Heart right ventricle (tissue), 16 donors: ENCODE measurements at regions of chr13 and their contacts with region 1.

Region 1: DNA sequence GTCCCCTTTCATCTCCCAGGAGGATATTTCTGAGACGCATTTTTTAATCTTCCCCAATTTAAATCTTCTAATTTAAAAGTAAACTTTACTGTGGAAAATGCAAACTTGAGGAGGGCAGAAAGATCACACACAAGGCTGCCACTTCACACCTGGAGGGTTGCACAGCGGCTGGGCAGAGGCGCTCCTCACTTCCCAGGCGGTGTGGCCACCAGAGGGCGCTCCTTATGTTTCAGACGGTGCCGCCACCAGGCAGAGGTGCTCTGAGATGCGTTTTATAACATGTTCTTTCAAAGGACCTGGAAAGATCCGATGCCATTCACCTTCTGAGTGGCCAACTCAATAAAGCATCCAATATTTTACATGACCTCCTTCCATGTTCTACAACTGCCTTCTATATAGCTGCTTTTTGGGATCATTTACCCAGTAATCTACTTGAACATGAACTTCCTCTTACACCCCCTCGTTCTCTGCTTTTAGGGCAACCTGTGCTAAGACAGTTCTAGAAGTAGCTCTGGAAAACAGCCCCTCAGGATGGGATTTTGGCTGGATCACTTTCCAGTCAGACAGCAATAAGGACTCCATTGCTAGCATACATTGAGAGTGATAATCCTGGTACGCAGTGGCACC is 14.8 kb upstream of the MTUS2 start:
- DNase-seq: peak; percentile 11 to 48
- ATAC-seq: peak in 1 of 8 donors; percentile 45
- H3K4me3 ChIP-seq: no peak overlapping the region
- H3K27ac ChIP-seq: no peak overlapping the region
- H3K4me1 ChIP-seq: no peaks in the 10 kb centered on the region
- H3K27me3 ChIP-seq: peaks cover 0 to 41% (median 9%) of the 10 kb centered on the region in 7 donors
- CTCF ChIP-seq: peak in 7 of 9 donors; percentile 36 to 52 (median 45)

Region 2: GRCh38 chr13:28697441-28697840 is 107.9 kb before region 1 on chr13:
- intact Hi-C with region 1: no loop called
- DNase-seq: no peak
- ATAC-seq: no peak
- H3K4me3 ChIP-seq: no peak overlapping the region
- H3K27ac ChIP-seq: no peak overlapping the region
- H3K4me1 ChIP-seq: no peaks in the 10 kb centered on the region
- H3K27me3 ChIP-seq: no peaks in the 10 kb centered on the region
- CTCF ChIP-seq: no peak

Region 3: GRCh38 chr13:29260683-29261082 is 455.4 kb after region 1 on chr13:
- intact Hi-C with region 1: loop called in 4 of 10 experiments (anchors 10 kb)
- DNase-seq: no peak
- ATAC-seq: peak in 7 of 8 donors; percentile 29 to 82 (median 75)
- H3K4me3 ChIP-seq: no peak overlapping the region
- H3K27ac ChIP-seq: no peak overlapping the region
- H3K4me1 ChIP-seq: peaks cover 0 to 7% (median 0%) of the 10 kb centered on the region in 9 donors
- H3K27me3 ChIP-seq: peaks cover 0 to 3% (median 0%) of the 10 kb centered on the region in 7 donors
- CTCF ChIP-seq: peak in 8 of 9 donors; percentile 6 to 58 (median 44)

Region 4: DNA sequence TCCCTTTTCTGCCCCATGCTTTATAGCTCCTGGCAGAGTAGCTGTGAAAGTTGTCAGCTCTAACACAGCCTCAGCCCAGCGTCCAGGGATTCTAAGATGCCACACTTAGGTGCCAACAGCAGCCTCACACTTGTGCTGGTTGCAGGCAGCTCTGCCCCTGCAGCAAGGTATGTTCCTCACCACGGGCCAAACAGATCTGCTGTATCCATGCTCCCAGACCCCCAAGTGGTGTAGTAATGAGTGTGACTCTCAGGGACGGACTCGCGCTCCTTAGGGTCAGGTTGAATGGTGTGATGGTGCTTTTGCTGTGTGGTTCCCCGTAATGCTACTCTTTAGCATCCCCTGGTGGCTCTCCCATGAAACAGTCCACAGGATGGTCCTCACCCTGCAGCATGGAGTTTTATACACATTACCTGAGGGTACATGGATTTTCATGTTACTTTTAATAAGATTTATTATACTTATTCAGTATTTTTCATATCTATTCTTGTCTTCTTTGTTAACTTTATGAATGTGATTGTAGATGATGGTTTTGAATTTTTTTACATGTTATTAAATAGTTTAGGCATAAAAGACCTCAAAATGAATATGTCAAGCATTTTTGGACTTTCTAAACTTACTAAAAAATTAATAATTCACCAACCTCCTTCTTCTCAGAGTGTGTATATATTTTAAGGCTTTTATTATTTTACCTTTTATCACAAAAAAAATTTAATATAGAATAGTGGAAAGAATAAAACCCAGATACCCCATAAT is 557.7 kb after region 1 on chr13:
- intact Hi-C with region 1: loop called in 4 of 10 experiments (anchors 1 to 10 kb)
- DNase-seq: peak in 1 of 2 donors; percentile 24
- ATAC-seq: peak; percentile 67 to 89 (median 82)
- H3K4me3 ChIP-seq: no peak overlapping the region
- H3K27ac ChIP-seq: no peak overlapping the region
- H3K4me1 ChIP-seq: no peaks in the 10 kb centered on the region
- H3K27me3 ChIP-seq: no peaks in the 10 kb centered on the region
- CTCF ChIP-seq: peak; percentile 46 to 87 (median 81)

Region 5: DNA sequence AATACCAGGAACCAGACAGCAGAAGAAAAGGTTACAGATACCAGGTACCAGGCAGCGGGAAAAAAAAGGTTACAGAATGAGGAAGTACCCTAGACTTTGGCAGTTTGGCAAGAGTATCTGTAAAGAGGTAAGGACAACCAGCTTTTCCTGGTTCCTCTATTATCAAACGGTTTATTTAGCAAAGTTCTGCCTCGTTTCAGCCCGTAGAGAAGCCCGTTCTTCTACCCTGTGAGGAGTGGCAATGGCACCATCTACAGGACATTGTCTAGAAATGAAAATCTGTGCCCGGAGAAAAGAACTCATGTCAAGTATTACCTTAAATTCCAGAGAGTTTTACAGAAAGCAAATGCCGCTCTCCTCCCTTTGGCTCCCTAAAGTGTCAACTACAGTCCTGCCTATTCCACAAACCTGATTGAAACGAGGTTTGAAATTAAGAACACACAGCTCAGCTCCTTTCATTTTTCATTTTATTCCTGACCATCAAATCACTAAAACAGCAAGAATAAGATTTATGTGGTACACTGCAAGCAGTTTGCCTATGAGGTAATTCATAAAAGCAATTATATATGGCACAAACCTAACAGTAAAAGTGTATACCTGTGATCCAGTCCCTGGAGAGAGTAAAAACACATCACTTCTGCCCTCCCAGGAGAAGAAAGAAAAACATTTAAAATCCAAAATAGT is 563.9 kb after region 1 on chr13:
- intact Hi-C with region 1: loop called in 4 of 10 experiments (anchors 1 to 10 kb)
- DNase-seq: no peak
- ATAC-seq: peak in 4 of 8 donors; percentile 28 to 57 (median 38)
- H3K4me3 ChIP-seq: no peak overlapping the region
- H3K27ac ChIP-seq: no peak overlapping the region
- H3K4me1 ChIP-seq: no peaks in the 10 kb centered on the region
- H3K27me3 ChIP-seq: peaks cover 0 to 4% (median 0%) of the 10 kb centered on the region in 7 donors
- CTCF ChIP-seq: peak in 8 of 9 donors; percentile 25 to 62 (median 49)